ENCODE measurements at regions of chr1 and their contacts with region 1.

Region 1: DNA sequence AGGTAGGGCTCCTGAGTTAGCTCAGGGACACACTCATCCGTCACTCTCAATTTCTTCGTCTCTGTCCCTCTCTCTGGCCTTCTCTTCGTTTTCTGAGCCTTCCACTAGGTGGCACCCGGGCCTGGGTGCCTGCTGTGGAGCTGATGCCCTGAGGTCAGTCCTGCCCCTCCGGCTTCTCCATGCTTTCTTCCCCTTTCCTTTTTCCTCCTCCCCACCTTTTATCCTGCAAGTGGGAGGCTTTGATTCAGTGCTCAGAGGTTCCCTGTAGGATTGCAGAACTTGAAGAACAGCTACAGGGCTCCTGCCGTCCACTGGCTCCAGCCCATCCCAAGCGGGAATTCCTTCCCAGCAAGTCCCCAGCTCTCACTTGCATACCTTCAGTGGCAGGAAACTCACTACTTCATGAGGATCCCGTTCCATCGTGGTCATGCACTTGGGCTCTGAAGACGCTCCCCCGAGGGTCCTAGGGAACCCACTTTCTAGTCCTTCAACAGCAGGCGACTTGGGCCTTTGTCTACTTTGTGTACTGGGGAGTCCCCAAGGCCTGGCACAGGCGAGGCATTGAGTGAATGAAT is 45.6 kb downstream of the SRRM1 start:
- DNase-seq: peak; percentile 54
- H3K4me3 ChIP-seq: no peak overlapping the region
- H3K27ac ChIP-seq: no peak overlapping the region
- H3K4me1 ChIP-seq: no peaks in the 10 kb centered on the region
- H3K27me3 ChIP-seq: no peaks in the 10 kb centered on the region
- CTCF ChIP-seq: peak; percentile 29 to 87 (median 80)
- POLR2A ChIP-seq: no peak

Region 2: GRCh38 chr1:24727501-24728216 is 39.0 kb after region 1 on chr1:
- intact Hi-C with region 1: no loop called
- DNase-seq: no peak
- H3K4me3 ChIP-seq: no peak overlapping the region
- H3K27ac ChIP-seq: peak overlapping the region; percentile 1 to 16
- H3K4me1 ChIP-seq: no peaks in the 10 kb centered on the region
- H3K27me3 ChIP-seq: no peaks in the 10 kb centered on the region
- CTCF ChIP-seq: no peak
- POLR2A ChIP-seq: no peak

Region 3: GRCh38 chr1:24805534-24806301 is 117.0 kb after region 1 on chr1:
- intact Hi-C with region 1: no loop called
- DNase-seq: no peak
- H3K4me3 ChIP-seq: no peak overlapping the region
- H3K27ac ChIP-seq: no peak overlapping the region
- H3K4me1 ChIP-seq: no peaks in the 10 kb centered on the region
- H3K27me3 ChIP-seq: no peaks in the 10 kb centered on the region
- CTCF ChIP-seq: no peak
- POLR2A ChIP-seq: no peak

Region 4: GRCh38 chr1:24830680-24831272 is 142.1 kb after region 1 on chr1:
- intact Hi-C with region 1: loop called (anchors 2 kb)
- DNase-seq: no peak
- H3K4me3 ChIP-seq: no peak overlapping the region
- H3K27ac ChIP-seq: no peak overlapping the region
- H3K4me1 ChIP-seq: no peaks in the 10 kb centered on the region
- H3K27me3 ChIP-seq: no peaks in the 10 kb centered on the region
- CTCF ChIP-seq: peak; percentile 40 to 88 (median 82)
- POLR2A ChIP-seq: no peak

Measured in prostate gland (tissue), 2 donors.